ENCODE measurements at regions of chr3 and their contacts with region 1.

Region 1: DNA sequence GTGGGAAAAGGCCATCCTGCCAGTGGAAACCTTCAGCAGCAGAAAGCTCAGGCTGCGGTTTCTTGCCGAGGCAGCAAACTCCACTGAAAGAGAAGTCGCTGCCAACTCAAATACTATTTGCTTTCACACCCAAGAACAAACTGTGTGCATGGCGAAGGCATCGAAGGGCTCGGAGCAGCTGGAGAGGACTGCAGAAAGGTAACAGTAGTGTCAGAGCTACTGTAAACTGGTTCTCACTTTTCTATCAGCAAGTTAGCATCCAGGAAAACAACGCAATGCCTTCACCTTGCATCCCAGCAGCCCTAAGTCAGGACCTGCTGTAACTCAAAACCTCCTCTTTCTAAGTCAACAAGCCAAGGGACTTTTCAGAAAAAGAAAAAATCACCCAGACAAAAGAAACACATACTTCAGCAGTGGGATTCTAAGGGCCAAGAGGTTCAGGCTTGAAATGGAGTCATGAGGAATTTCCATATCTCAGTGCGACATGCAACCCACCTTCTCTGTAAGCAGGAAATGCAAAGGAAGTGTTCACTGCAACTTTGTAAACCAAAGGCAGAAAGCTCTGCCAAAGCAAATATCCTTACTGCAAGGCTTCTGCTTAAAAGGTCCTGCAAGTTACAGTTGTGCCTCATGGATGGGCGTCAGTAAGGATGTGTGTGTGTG is 193.5 kb downstream of the FOXP1 start:
- DNase-seq: peak; percentile 95
- H3K4me3 ChIP-seq: peak overlapping the region in 1 of 3 experiments; percentile 29
- H3K27ac ChIP-seq: peak overlapping the region; percentile 88
- H3K4me1 ChIP-seq: peaks cover 41% of the 10 kb centered on the region
- H3K27me3 ChIP-seq: no peaks in the 10 kb centered on the region
- CTCF ChIP-seq: no peak
- POLR2A ChIP-seq: peak; percentile 37

Region 2: DNA sequence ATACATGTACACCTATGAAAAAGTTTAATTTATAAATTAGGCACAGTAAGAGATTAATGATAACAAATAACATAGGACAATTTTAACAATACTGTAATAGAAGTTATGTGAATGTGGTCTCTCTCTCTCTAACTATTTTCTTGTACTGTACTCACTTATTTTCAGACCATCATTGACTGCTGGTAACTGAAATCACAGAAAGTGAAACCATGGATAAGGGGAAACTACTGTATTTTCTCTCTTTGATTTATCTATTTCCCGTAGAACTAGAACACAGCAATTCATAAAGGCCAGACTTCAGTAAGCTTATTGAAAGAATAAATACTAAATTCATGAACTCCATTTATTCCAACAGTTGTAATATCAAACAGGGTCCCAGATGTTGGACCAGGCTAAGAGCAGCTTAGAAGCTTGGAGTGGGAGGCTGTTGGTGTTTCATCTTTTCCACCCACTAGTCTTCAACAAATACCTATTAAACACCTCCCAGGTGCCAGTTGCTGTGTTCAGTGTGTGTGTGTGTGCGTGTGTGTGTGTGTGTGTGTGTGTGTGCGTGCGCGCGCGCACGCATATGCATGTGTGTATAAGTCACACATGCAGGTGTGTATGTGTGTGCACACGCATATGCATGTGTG is 41.9 kb before region 1 on chr3:
- CTCF ChIA-PET with region 1: no interaction called
- POLR2A ChIA-PET with region 1: no interaction called
- dilution Hi-C with region 1: no loop called
- intact Hi-C with region 1: no loop called
- DNase-seq: no peak
- H3K4me3 ChIP-seq: no peak overlapping the region
- H3K27ac ChIP-seq: no peak overlapping the region
- H3K4me1 ChIP-seq: no peaks in the 10 kb centered on the region
- H3K27me3 ChIP-seq: no peaks in the 10 kb centered on the region
- CTCF ChIP-seq: no peak
- POLR2A ChIP-seq: no peak

Region 3: DNA sequence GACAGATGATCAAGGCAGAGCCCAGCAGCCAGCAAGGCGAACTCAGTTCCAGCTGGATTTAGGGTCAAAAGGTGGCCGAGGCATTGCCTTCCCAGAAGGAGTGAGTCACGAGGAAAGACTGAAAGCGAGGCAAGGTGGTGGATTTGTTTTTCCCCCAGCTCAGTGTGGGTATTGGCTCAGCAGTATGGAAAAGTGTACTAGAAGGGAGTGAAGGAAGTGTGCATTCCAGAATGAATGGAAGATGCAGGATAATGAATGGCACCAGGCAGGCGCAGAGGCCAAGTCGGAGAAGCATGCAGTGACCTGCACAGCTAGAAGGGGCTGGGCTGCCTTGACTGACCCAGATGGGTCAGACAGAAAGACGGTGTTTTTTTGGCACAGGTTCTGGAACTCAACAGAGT is 147.2 kb after region 1 on chr3:
- CTCF ChIA-PET with region 1: interaction called, 3 read pairs
- POLR2A ChIA-PET with region 1: interaction called, 4 read pairs
- dilution Hi-C with region 1: no loop called
- intact Hi-C with region 1: loop called (anchors 5 kb)
- DNase-seq: peak; percentile 98
- H3K4me3 ChIP-seq: no peak overlapping the region
- H3K27ac ChIP-seq: peak overlapping the region; percentile 60
- H3K4me1 ChIP-seq: peaks cover 56% of the 10 kb centered on the region
- H3K27me3 ChIP-seq: no peaks in the 10 kb centered on the region
- CTCF ChIP-seq: no peak
- POLR2A ChIP-seq: no peak

Region 4: DNA sequence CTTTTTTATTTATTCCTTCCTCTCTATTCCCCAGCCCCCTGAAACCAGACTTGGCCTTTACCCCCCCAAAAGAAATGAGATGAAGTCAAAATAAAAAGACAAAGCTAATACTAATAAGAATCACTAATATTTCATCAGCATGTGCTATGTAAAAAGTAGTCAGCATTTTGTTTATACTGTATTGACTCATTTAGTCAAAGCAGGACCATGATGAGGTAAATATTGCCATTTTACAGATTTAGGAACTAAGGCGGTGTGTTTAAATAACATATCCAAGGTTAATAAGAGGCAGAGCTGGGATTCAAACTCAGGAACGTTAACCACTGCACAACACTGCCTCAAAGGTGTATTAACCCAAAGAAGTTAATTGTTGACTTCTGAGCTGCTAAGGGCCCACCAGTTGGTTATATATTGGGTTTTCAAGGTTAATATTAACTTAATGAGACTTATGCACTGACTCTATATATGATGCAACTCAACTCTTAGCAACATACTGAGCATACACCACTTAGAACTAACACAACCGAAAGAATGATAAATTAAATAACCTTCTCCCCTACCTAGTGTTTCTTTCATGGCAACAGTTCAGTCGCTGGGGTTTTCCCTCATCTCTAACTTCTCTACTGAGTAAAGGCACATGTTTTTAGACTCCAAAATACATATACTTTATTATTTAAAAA is 158.8 kb after region 1 on chr3:
- CTCF ChIA-PET with region 1: no interaction called
- POLR2A ChIA-PET with region 1: no interaction called
- dilution Hi-C with region 1: no loop called
- intact Hi-C with region 1: no loop called
- DNase-seq: no peak
- H3K4me3 ChIP-seq: no peak overlapping the region
- H3K27ac ChIP-seq: no peak overlapping the region
- H3K4me1 ChIP-seq: peaks cover 17% of the 10 kb centered on the region
- H3K27me3 ChIP-seq: no peaks in the 10 kb centered on the region
- CTCF ChIP-seq: no peak
- POLR2A ChIP-seq: no peak